Gastrocnemius medialis (tissue), 4 donors: ENCODE measurements at regions of chr15 and their contacts with region 1.

Region 1: GRCh38 chr15:40754883-40755811 is at the start of gene RMDN3:
- DNase-seq: peak; percentile 78 to 88
- ATAC-seq: peak; percentile 90 to 93
- H3K4me3 ChIP-seq: peak within 1 kb of the TSS; percentile 90 to 100 (median 96)
- H3K27ac ChIP-seq: peak within 1 kb of the TSS; percentile 92 to 97 (median 95)
- H3K4me1 ChIP-seq: peaks cover 13 to 15% of the 10 kb centered on the region in 2 donors
- H3K27me3 ChIP-seq: no peaks in the 10 kb centered on the region
- CTCF ChIP-seq: no peak
- POLR2A ChIP-seq: peak; percentile 78 to 80
- total RNA-seq, gene RMDN3: 12.7 to 55.3 (median 19.6) TPM

Region 2: GRCh38 chr15:40807028-40807887 is 52.1 kb after region 1 on chr15 and contains the starts of genes DNAJC17 and ZFYVE19:
- in situ Hi-C with region 1: loop called in 2 of 4 experiments (anchors 10 kb)
- intact Hi-C with region 1: loop called (anchors 5 kb)
- DNase-seq: peak; percentile 97
- ATAC-seq: peak; percentile 98 to 99
- H3K4me3 ChIP-seq: peak within 1 kb of the TSS; percentile 87 to 100 (median 94)
- H3K27ac ChIP-seq: peak within 1 kb of the TSS; percentile 96 to 100 (median 97)
- H3K4me1 ChIP-seq: peaks cover 19 to 34% of the 10 kb centered on the region in 2 donors
- H3K27me3 ChIP-seq: no peaks in the 10 kb centered on the region
- CTCF ChIP-seq: peak in 1 of 5 experiments; percentile 30
- POLR2A ChIP-seq: peak; percentile 62 to 66
- total RNA-seq, gene DNAJC17: 5.3 to 25.0 (median 11.4) TPM
- total RNA-seq, gene ZFYVE19: 11.4 to 18.9 (median 14.7) TPM

Region 3: GRCh38 chr15:41501191-41501917 is 746.2 kb after region 1 on chr15:
- in situ Hi-C with region 1: no loop called
- intact Hi-C with region 1: no loop called
- DNase-seq: no peak
- ATAC-seq: no peak
- H3K4me3 ChIP-seq: peak overlapping the region in 3 of 4 donors; percentile 28 to 47 (median 34)
- H3K27ac ChIP-seq: no peak overlapping the region
- H3K4me1 ChIP-seq: peaks cover 0 to 10% of the 10 kb centered on the region in 2 donors
- H3K27me3 ChIP-seq: peaks cover 46 to 49% (median 47%) of the 10 kb centered on the region in 3 donors
- CTCF ChIP-seq: no peak
- POLR2A ChIP-seq: no peak